Adrenal gland (tissue), 19 donors: ENCODE measurements at regions of chr11 and their contacts with region 1.

Region 1: GRCh38 chr11:118168751-118169150 is 7.7 kb downstream of the SCN2B start:
- DNase-seq: no peak
- H3K4me3 ChIP-seq: no peak overlapping the region
- H3K27ac ChIP-seq: no peak overlapping the region
- H3K4me1 ChIP-seq: peaks cover 0 to 9% of the 10 kb centered on the region in 2 donors
- H3K27me3 ChIP-seq: peaks cover 5% of the 10 kb centered on the region
- CTCF ChIP-seq: no peak
- POLR2A ChIP-seq: no peak

Region 2: GRCh38 chr11:118145285-118146227 is 23.2 kb before region 1 on chr11:
- intact Hi-C with region 1: loop called (anchors 2 kb)
- DNase-seq: peak; percentile 68 to 91 (median 82)
- H3K4me3 ChIP-seq: peak overlapping the region in 3 of 4 donors; percentile 13 to 48 (median 35)
- H3K27ac ChIP-seq: no peak overlapping the region
- H3K4me1 ChIP-seq: no peaks in the 10 kb centered on the region
- H3K27me3 ChIP-seq: peaks cover 21% of the 10 kb centered on the region
- CTCF ChIP-seq: peak; percentile 87 to 95 (median 92)
- POLR2A ChIP-seq: no peak